B cell (primary cell): ENCODE measurements at regions of chr4 and their contacts with region 1.

Region 1: DNA sequence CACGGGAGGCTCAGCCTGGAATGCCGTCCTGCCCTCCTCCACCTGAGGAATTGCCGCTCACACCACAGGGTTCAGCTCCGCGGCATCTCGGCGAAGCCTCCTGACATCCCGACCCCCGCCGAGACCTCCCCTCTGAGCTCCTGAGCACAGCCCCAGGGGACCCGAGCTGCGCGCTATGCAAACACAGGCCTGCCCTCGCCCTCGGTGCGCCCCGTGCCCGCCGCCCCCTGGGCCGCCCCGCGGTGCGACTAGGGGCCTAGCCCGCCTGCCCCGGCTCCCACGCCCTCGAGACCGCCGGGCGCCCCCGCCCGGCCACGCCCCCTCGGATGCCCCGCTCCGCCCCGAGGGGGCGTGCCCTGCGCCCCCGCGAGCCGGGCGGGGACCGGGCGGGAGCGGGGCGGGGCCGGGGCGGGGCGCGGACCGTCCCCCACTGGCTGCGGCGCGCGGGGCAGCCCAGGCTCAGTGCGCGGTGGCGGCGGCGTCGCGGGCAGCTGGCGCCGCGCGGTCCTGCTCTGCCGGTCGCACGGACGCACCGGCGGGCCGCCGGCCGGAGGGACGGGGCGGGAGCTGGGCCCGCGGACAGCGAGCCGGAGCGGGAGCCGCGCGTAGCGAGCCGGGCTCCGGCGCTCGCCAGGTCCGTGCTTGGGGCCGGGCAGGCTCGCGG is at the start of gene FGFR3:
- DNase-seq: peak; percentile 67
- ATAC-seq: peak; percentile 83
- H3K4me3 ChIP-seq: peak within 1 kb of the TSS in 4 of 5 experiments; percentile 11 to 48 (median 41)
- H3K4me3 Mint-ChIP-seq: peak within 1 kb of the TSS; percentile 66
- H3K27ac ChIP-seq: no peak within 1 kb of the TSS
- H3K27ac Mint-ChIP-seq: no peak within 1 kb of the TSS
- H3K4me1 ChIP-seq: peaks cover 20 to 27% of the 10 kb centered on the region in 2 donors
- H3K4me1 Mint-ChIP-seq: peaks cover 3% of the 10 kb centered on the region
- H3K27me3 ChIP-seq: peaks cover 0 to 42% (median 28%) of the 10 kb centered on the region in 4 experiments
- H3K27me3 Mint-ChIP-seq: peaks cover 10% of the 10 kb centered on the region
- CTCF ChIP-seq: no peak
- total RNA-seq, gene FGFR3: not detected in 2 replicates

Region 2: GRCh38 chr4:1767770-1768366 is 25.1 kb before region 1 on chr4:
- CTCF ChIA-PET with region 1: no interaction called
- POLR2A ChIA-PET with region 1: no interaction called
- intact Hi-C with region 1: loop called (anchors 2 kb)
- DNase-seq: peak; percentile 47
- ATAC-seq: peak; percentile 48
- H3K4me3 ChIP-seq: peak overlapping the region in 3 of 5 experiments; percentile 18 to 19 (median 19)
- H3K4me3 Mint-ChIP-seq: peak overlapping the region; percentile 86
- H3K27ac ChIP-seq: no peak overlapping the region
- H3K27ac Mint-ChIP-seq: no peak overlapping the region
- H3K4me1 ChIP-seq: peaks cover 32 to 35% of the 10 kb centered on the region in 2 donors
- H3K4me1 Mint-ChIP-seq: peaks cover 19% of the 10 kb centered on the region
- H3K27me3 ChIP-seq: peaks cover 0 to 57% (median 10%) of the 10 kb centered on the region in 4 experiments
- H3K27me3 Mint-ChIP-seq: peaks cover 16% of the 10 kb centered on the region
- CTCF ChIP-seq: peak; percentile 45